ENCODE measurements at regions of chr7 and their contacts with region 1.

Region 1: DNA sequence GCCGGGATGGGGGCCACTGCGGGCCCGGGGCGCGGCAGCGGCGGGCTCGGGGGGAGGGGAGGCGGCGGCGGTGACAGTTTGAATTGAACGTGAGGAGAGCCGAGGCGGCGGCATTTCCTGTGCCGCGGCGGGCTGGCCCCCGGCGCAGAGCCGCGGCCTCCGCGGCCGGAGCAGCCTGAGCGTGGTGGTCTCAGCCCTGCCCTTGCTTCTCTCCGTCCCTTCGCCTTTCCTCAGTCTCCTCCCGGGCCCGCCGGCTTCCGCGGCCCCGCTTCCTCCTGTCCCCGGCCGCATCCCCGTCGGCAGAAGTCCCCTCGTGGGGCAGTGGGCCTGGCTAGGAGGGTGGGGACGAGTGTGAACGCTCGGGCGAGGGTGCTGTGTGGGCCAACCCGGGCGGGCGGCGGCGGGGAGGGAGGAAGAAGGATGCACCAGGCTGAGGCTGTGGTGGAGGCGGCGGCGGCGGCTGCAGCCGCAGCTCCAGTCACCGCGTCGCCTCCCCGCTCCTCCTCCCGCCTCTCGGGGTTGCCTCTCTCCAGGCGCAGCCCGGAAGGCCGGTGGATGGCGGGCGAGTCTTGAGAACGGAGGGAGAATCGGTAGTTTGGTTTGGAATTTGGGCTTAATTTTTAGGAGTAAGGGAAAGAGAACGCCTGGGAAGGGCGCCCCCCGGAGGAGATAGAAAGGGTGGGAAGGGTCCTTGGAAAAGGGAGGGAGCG is 690 bp downstream of the SEPTIN7 start:
- DNase-seq: peak; percentile 32
- ATAC-seq: peak; percentile 78
- H3K4me3 ChIP-seq: peak overlapping the region; percentile 85 to 97 (median 87)
- H3K27ac ChIP-seq: peak overlapping the region; percentile 96
- H3K4me1 ChIP-seq: peaks cover 45% of the 10 kb centered on the region
- H3K27me3 ChIP-seq: peaks cover 0 to 3% of the 10 kb centered on the region in 2 experiments; a peak in 1 of 5 replicates
- CTCF ChIP-seq: peak; percentile 69
- EP300 ChIP-seq: no peak
- POLR2A ChIP-seq: 0 out of 4 replicates have a peak, but pooled peaks of 1 of the 2 experiments have one; percentile 12
- RAD21 ChIP-seq: no peak

Region 2: DNA sequence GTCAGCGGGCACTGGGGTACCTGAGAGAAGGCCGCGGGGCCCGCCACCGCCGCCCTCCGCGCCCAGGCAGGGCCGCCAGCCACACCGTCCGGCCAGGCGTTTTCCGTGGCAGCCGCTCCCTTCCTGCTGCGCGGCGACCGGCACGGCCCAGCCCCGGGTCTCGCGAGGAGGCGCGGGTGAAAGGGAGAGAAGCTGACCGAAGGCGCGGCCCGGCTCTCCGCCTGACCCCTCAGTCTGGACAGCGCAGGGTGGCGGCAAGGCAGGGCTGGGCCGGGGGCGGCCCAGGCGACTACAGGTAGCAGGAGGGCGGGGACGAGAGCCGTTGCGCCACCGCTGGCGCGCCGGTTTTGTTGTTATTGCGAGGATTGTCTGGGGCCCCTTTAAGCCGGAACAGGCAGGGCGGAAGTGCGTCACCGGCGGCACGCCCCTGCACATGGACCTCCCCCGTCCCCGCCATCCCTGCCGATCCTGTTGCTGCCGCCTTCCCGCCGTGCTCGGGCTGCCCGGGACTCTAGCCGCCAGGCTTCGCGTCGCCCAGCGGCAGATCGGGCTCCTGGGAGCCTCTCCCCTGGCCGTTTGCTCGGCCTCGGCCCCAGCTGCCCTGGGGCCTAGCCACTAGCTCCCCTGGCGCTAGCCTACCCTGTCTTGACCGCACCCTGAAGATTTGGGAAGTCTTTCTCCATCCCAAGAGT is 106.6 kb before region 1 on chr7 and contains the start of gene HERPUD2:
- CTCF ChIA-PET with region 1: no interaction called
- POLR2A ChIA-PET with region 1: interaction called, 52 read pairs
- in situ Hi-C with region 1: no loop called
- intact Hi-C with region 1: no loop called
- DNase-seq: peak; percentile 88
- ATAC-seq: peak; percentile 95
- H3K4me3 ChIP-seq: peak within 1 kb of the TSS; percentile 78 to 97 (median 89)
- H3K27ac ChIP-seq: peak within 1 kb of the TSS; percentile 90
- H3K4me1 ChIP-seq: peaks cover 54% of the 10 kb centered on the region
- H3K27me3 ChIP-seq: no peaks in the 10 kb centered on the region; a peak in 1 of 5 replicates
- CTCF ChIP-seq: peak; percentile 32; the same call in 1 of the 2 replicates
- EP300 ChIP-seq: peak; percentile 14 to 24; a peak in 1 of 4 replicates
- POLR2A ChIP-seq: peak; percentile 74 to 89
- RAD21 ChIP-seq: no peak
- total RNA-seq, gene HERPUD2: 10.4 and 10.7 TPM in 2 replicates

Region 3: DNA sequence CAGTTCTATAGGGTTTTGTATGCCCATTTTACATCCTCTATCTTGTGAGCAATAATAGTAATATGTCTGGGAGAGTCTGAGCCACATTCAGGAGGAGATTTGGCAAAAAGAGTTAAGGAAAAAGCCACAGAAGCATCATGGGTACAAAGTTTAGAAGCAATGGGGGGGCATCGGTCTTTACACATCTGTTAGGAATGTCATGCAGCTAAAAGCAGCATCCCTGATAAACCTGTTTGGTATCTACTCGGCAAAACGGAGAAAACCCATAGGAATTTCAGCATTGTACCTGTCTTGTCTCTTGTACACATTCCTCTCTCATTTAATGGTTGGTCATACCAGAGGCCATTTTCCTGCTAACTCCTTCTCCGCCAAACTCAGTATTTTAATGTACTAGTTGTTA is 94.1 kb before region 1 on chr7:
- CTCF ChIA-PET with region 1: no interaction called
- POLR2A ChIA-PET with region 1: interaction called, 4 read pairs
- in situ Hi-C with region 1: no loop called
- intact Hi-C with region 1: loop called (anchors 1 kb)
- DNase-seq: no peak
- ATAC-seq: no peak
- H3K4me3 ChIP-seq: no peak overlapping the region
- H3K27ac ChIP-seq: no peak overlapping the region
- H3K4me1 ChIP-seq: peaks cover 14% of the 10 kb centered on the region
- H3K27me3 ChIP-seq: no peaks in the 10 kb centered on the region
- CTCF ChIP-seq: no peak
- EP300 ChIP-seq: no peak
- POLR2A ChIP-seq: no peak
- RAD21 ChIP-seq: no peak

Region 4: GRCh38 chr7:35758421-35758820 is 43.1 kb before region 1 on chr7:
- CTCF ChIA-PET with region 1: no interaction called
- POLR2A ChIA-PET with region 1: interaction called, 3 read pairs
- in situ Hi-C with region 1: no loop called
- intact Hi-C with region 1: loop called (anchors 1 kb)
- DNase-seq: peak; percentile 28
- ATAC-seq: peak; percentile 85
- H3K4me3 ChIP-seq: no peak overlapping the region
- H3K27ac ChIP-seq: no peak overlapping the region
- H3K4me1 ChIP-seq: peaks cover 26% of the 10 kb centered on the region
- H3K27me3 ChIP-seq: no peaks in the 10 kb centered on the region
- CTCF ChIP-seq: peak; percentile 27; the same call in 1 of the 2 replicates
- EP300 ChIP-seq: no peak
- POLR2A ChIP-seq: no peak
- RAD21 ChIP-seq: no peak

Region 5: DNA sequence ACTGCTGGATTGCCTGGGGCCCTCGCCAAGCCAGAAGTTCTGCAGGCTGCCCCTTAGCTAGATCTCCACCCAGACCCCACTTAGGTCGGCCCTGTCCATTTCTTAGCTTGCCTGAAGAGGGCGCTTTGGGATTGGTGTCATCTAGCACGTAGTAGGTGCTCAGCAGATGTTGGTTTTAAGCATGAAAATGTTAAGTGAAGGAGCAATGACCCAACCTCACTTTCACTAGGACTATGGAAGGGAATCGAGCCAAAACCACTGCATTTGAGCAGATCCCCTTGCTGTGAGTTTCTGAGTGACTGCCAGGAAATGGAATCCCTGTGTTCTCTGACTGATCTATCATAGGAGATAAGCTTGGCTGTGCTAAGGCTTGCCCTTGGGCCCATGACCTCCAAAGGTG is 219.8 kb after region 1 on chr7:
- CTCF ChIA-PET with region 1: no interaction called
- POLR2A ChIA-PET with region 1: no interaction called
- in situ Hi-C with region 1: no loop called
- intact Hi-C with region 1: no loop called
- DNase-seq: no peak
- ATAC-seq: no peak
- H3K4me3 ChIP-seq: no peak overlapping the region
- H3K27ac ChIP-seq: no peak overlapping the region
- H3K4me1 ChIP-seq: no peaks in the 10 kb centered on the region
- H3K27me3 ChIP-seq: peaks cover 0 to 39% of the 10 kb centered on the region in 2 experiments; a peak in 3 of 5 replicates
- CTCF ChIP-seq: peak; percentile 56
- EP300 ChIP-seq: no peak
- POLR2A ChIP-seq: no peak
- RAD21 ChIP-seq: no peak

Region 6: DNA sequence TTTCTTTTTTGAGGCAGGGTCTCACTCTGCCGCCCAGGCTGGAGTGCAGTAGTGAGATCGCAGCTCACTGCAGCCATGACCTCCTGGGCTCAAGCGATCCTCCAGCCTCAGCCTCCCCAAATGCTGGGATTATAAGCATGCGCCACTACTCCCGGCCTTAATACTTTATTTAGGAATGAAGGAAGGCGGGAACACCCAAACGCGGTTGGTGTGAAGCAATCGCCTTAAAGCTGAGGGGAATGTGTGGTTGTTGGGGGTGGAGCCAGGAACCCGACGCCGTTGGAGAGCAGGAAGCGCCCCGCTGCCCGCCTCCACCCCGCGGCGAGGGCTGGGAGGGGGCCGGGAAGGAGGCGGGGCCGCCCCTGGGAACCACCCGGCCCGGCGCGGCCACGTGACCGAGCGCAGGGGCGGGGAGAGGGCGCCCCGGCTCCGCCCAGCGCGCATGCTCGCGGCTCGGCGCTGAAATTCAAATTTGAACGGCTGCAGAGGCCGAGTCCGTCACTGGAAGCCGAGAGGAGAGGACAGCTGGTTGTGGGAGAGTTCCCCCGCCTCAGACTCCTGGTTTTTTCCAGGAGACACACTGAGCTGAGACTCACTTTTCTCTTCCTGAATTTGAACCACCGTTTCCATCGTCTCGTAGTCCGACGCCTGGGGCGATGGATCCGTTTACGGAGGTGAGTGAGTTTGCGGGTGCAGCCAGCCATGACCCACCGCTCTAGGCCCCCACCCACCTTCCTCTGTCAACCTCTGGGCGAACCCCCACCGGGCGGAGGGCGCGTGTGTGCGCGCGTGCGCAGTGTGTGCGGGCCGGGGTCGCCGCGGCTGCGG is 588.0 kb after region 1 on chr7 and contains the start of gene ANLN:
- CTCF ChIA-PET with region 1: no interaction called
- POLR2A ChIA-PET with region 1: interaction called, 7 read pairs
- in situ Hi-C with region 1: no loop called
- intact Hi-C with region 1: loop called (anchors 5 kb)
- DNase-seq: peak; percentile 92
- ATAC-seq: peak; percentile 83
- H3K4me3 ChIP-seq: peak within 1 kb of the TSS; percentile 93 to 97 (median 97)
- H3K27ac ChIP-seq: peak within 1 kb of the TSS; percentile 89
- H3K4me1 ChIP-seq: peaks cover 45% of the 10 kb centered on the region
- H3K27me3 ChIP-seq: no peaks in the 10 kb centered on the region; a peak in 1 of 5 replicates
- CTCF ChIP-seq: no peak
- EP300 ChIP-seq: peak in 1 of 2 experiments; percentile 11; a peak in 1 of 4 replicates
- POLR2A ChIP-seq: peak; percentile 71 to 96
- RAD21 ChIP-seq: no peak; the same call in 1 of the 2 replicates
- total RNA-seq, gene ANLN: 38.8 and 72.0 TPM in 2 replicates

Region 7: DNA sequence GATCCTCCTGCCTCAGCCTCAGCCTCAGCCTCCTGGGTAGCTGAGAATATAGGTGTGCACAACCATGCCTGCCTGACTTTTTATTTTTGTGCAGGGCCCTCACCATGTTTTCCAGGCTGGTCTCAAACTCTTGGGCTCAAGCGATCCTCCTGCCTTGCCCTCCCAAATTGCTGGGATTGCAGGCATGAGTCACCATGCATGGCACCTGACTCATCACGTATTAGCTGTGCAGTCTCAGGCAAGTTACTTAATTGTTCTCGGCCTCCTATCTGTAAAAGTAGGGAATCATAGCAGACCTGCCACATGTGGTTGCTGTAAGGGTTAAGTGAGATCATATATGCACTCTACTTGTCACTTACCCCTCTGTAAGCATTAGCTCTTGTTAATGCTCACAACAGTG is 705.3 kb after region 1 on chr7:
- CTCF ChIA-PET with region 1: no interaction called
- POLR2A ChIA-PET with region 1: no interaction called
- in situ Hi-C with region 1: no loop called
- intact Hi-C with region 1: no loop called
- DNase-seq: no peak
- ATAC-seq: no peak
- H3K4me3 ChIP-seq: no peak overlapping the region
- H3K27ac ChIP-seq: no peak overlapping the region
- H3K4me1 ChIP-seq: no peaks in the 10 kb centered on the region
- H3K27me3 ChIP-seq: no peaks in the 10 kb centered on the region
- CTCF ChIP-seq: no peak
- EP300 ChIP-seq: no peak
- POLR2A ChIP-seq: no peak
- RAD21 ChIP-seq: no peak